HEK293 (cell line): ENCODE measurements at regions of chr9 and their contacts with region 1.

Region 1: GRCh38 chr9:98838155-98838867 is 30.8 kb downstream of the GALNT12 start:
- H3K4me3 ChIP-seq: no peak overlapping the region
- H3K27ac ChIP-seq: no peak overlapping the region
- H3K4me1 ChIP-seq: no peaks in the 10 kb centered on the region
- CTCF ChIP-seq: no peak

Region 2: GRCh38 chr9:98848450-98849149 is 10.3 kb after region 1 on chr9:
- CTCF ChIA-PET with region 1: interaction called, 11 read pairs
- POLR2A ChIA-PET with region 1: interaction called, 4 read pairs
- H3K4me3 ChIP-seq: no peak overlapping the region
- H3K27ac ChIP-seq: no peak overlapping the region
- H3K4me1 ChIP-seq: no peaks in the 10 kb centered on the region
- CTCF ChIP-seq: peak; percentile 69; the same call in 1 of the 2 replicates